ENCODE measurements at regions of chr12 and their contacts with region 1.

Region 1: DNA sequence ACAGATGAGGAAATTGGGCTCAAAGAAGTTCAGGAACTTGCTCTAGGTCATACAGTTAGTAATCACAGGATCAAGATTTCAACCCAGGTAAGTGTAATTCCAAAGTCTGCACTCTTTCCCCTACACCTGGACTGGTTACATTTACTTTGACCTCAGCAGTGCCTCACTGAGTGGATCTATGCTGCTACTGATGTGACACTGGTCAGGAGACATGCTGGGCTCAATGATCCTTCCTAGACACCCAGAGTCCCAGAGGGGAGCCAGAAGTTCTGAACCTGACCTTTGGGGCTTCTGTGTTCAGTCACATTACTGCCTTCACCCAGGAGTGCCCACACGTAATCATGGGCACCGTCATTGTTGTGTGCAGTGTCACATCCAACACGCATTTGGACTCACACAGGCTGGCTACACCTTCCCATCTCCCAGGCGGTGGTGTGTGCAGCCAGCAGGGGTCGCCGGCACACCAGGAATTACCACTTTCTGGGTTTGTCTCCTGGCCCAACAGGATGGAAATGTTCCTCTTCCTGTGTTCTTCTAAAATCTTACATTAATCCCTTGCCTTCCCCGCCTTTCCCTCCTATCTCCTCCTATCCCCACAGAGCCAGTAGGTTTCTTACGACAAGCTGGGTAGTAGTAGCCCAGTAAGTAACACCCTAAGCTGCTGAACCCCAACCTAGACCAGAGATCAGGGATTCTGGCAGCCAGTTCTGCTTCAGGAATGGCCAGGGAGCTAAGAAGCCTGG is 25.6 kb downstream of the CALCOCO1 start:
- DNase-seq: peak; percentile 77 to 98 (median 88)

Region 2: GRCh38 chr12:53402871-53403270 is 298.8 kb before region 1 on chr12:
- intact Hi-C with region 1: no loop called
- DNase-seq: no peak

Region 3: DNA sequence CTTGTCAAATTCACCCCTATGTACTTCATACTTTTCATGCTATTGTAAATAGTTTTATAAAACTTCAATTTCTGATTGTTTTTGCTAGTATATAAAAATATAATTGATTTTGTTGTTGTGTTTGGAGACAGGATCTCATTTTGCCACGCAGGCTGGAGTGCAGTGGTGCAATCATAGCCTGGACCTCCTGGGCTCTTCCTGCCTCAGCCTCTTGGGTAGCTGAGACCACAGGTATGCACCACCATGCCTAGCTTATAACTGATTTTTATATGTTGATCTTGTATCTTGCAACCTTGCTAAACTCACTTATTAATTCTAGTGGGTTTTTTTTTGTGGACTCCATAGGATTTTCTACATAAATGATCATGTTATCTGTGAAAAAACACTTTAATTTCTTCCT is 49.3 kb before region 1 on chr12:
- intact Hi-C with region 1: no loop called
- DNase-seq: no peak

Region 4: GRCh38 chr12:53743266-53744129 is 41.8 kb after region 1 on chr12:
- intact Hi-C with region 1: loop called (anchors 1 kb)
- DNase-seq: peak in 9 of 10 donors; percentile 42 to 94 (median 64)